ENCODE measurements at regions of chr1 and their contacts with region 1.

Region 1: GRCh38 chr1:206544562-206545257 is 37.4 kb downstream of the RASSF5 start:
- DNase-seq: peak; percentile 61 to 87 (median 69)
- ATAC-seq: peak; percentile 26 to 84 (median 72)
- H3K4me3 ChIP-seq: no peak overlapping the region
- H3K27ac ChIP-seq: no peak overlapping the region
- H3K4me1 ChIP-seq: peaks cover 0 to 14% (median 8%) of the 10 kb centered on the region in 12 donors
- H3K27me3 ChIP-seq: no peaks in the 10 kb centered on the region
- CTCF ChIP-seq: peak; percentile 80 to 92 (median 88)
- POLR2A ChIP-seq: no peak

Region 2: DNA sequence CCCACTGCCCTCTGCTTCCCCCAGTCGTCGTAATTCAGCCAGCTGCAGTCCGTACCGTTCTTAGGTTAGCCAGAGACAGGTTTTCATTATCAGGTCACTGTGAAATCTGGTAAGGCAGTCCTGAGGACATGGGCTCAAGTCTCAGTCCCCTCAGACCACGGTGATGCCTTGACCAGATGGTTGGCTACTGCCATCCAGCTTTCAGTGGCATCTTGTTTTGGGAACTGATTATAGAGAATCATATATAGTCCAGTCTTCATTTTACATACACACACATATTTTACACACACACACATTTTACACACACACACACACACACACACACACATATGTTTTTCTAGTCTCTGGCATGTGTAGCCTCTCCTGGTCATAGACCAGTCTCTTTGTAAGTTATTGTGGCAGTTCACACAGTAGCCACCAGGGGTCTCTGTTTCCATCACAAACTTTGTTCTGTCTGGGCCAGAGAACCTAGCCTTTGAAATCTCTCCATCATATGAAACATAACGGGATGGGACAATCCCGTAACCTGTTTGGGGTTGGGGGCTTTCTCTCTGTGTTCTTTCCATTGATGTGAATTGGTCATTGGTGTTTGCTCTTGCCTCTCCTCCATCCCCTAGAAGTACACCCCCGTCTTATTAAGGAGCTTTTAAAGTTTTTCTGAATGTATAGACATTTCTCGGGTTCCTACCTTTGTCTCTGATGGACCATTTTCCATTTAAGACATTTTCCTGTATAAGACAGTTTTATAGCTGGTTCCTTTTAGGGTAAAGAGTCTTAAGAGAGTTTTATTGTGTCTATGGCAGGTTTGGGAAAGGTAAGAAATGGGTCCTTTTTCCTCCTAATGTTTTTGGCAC is 82.9 kb before region 1 on chr1:
- intact Hi-C with region 1: no loop called
- DNase-seq: peak in 4 of 5 donors; percentile 54 to 70 (median 66)
- ATAC-seq: peak; percentile 63 to 73 (median 69)
- H3K4me3 ChIP-seq: no peak overlapping the region
- H3K27ac ChIP-seq: peak overlapping the region in 11 of 12 donors; percentile 54 to 83 (median 69)
- H3K4me1 ChIP-seq: peaks cover 0 to 49% (median 23%) of the 10 kb centered on the region in 12 donors
- H3K27me3 ChIP-seq: no peaks in the 10 kb centered on the region
- CTCF ChIP-seq: peak; percentile 64 to 84 (median 81)
- POLR2A ChIP-seq: no peak

Region 3: DNA sequence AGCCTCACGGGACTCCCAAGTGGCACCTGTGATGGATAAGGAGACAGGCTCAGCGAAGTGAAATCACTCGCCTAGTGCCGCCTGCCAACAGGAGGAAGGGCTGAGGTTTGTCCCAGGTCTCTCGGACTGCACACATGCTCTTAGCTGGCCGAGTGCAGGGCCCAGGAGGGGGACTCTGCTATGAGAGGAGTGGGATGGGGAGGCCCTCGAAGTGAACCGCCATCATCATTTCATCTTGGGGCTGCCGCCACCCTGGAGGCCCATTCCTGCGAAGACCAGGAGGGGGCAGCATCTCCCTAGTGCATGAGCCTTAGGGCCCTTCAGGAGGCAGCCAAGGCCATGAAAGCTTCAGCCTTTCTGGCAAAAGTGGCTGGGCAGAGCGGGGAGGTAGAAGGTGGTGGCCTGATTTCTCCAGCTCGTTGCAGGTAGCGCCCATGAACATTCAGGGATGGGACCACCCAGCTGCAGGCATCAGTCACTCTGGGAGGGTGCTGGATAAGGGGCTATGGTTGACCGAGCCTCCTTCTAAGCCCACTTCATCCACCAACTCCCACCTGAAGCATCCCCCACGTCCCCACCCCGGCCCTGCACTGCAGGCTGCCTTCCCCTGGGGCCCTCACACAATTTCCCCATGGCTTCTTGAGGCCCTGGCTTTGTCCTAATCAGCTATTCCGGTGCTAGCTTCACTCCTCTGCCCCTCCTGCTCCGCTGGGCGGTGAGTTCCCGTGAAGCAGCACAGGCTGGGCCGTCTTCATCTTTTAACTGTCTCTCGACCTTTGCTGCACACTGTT is 54.5 kb before region 1 on chr1:
- intact Hi-C with region 1: loop called (anchors 5 to 10 kb)
- DNase-seq: peak; percentile 68 to 84 (median 78)
- ATAC-seq: peak; percentile 56 to 90 (median 86)
- H3K4me3 ChIP-seq: no peak overlapping the region
- H3K27ac ChIP-seq: no peak overlapping the region
- H3K4me1 ChIP-seq: peaks cover 0 to 36% (median 11%) of the 10 kb centered on the region in 12 donors
- H3K27me3 ChIP-seq: no peaks in the 10 kb centered on the region
- CTCF ChIP-seq: peak; percentile 88 to 98 (median 94)
- POLR2A ChIP-seq: no peak

Region 4: DNA sequence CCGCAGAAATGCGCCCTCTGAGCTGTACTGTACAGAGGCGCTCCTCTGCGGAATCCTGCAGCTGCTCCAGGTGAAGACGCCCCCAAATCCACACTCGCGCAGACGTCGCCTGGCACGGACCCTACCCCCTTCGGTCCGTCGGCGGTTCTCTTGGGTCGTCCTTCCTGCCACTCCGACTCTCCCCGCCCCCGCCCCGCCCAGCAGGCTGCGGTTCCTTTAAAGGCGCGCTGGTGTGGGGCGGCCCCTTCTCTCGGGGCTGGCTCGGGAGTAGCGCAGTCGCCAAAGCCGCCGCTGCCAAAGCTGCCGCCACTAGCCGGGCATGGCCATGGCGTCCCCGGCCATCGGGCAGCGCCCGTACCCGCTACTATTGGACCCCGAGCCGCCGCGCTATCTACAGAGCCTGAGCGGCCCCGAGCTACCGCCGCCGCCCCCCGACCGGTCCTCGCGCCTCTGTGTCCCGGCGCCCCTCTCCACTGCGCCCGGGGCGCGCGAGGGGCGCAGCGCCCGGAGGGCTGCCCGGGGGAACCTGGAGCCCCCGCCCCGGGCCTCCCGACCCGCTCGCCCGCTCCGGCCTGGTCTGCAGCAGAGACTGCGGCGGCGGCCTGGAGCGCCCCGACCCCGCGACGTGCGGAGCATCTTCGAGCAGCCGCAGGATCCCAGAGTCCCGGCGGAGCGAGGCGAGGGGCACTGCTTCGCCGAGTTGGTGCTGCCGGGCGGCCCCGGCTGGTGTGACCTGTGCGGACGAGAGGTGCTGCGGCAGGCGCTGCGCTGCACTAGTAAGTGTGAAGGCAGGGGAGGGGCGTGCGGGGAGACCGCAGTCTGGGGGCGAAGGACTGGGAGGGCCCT is 37.2 kb before region 1 on chr1 and contains the start of gene RASSF5:
- intact Hi-C with region 1: loop called in 2 of 10 experiments (anchors 5 kb)
- DNase-seq: peak; percentile 82 to 90 (median 85)
- ATAC-seq: peak; percentile 76 to 87 (median 86)
- H3K4me3 ChIP-seq: peak within 1 kb of the TSS; percentile 49 to 81 (median 66)
- H3K27ac ChIP-seq: peak within 1 kb of the TSS in 5 of 12 donors; percentile 17 to 45 (median 34)
- H3K4me1 ChIP-seq: peaks cover 0 to 74% (median 31%) of the 10 kb centered on the region in 12 donors
- H3K27me3 ChIP-seq: peaks cover 0 to 32% (median 0%) of the 10 kb centered on the region in 9 donors
- CTCF ChIP-seq: no peak
- POLR2A ChIP-seq: peak in 1 of 2 donors; percentile 48
- total RNA-seq, gene RASSF5: 3.2 to 27.4 (median 5.8) TPM

Region 5: GRCh38 chr1:206575894-206576737 is 31.4 kb after region 1 on chr1:
- intact Hi-C with region 1: loop called in 2 of 10 experiments (anchors 2 to 5 kb)
- DNase-seq: no peak
- ATAC-seq: no peak
- H3K4me3 ChIP-seq: peak overlapping the region in 1 of 12 donors; percentile 27
- H3K27ac ChIP-seq: peak overlapping the region in 10 of 12 donors; percentile 21 to 98 (median 46)
- H3K4me1 ChIP-seq: peaks cover 0 to 88% (median 27%) of the 10 kb centered on the region in 12 donors
- H3K27me3 ChIP-seq: no peaks in the 10 kb centered on the region
- CTCF ChIP-seq: no peak
- POLR2A ChIP-seq: no peak

Region 6: GRCh38 chr1:206583707-206584648 is 39.3 kb after region 1 on chr1:
- intact Hi-C with region 1: loop called (anchors 1 to 5 kb)
- DNase-seq: peak; percentile 70 to 84 (median 76)
- ATAC-seq: peak in 3 of 4 donors; percentile 40 to 55 (median 53)
- H3K4me3 ChIP-seq: no peak overlapping the region
- H3K27ac ChIP-seq: peak overlapping the region in 2 of 12 donors; percentile 30 to 80
- H3K4me1 ChIP-seq: peaks cover 0 to 55% (median 14%) of the 10 kb centered on the region in 12 donors
- H3K27me3 ChIP-seq: no peaks in the 10 kb centered on the region
- CTCF ChIP-seq: peak; percentile 83 to 97 (median 91)
- POLR2A ChIP-seq: no peak

Measured in heart left ventricle (tissue), 16 donors.